Esophagus muscularis mucosa (tissue), 4 donors: ENCODE measurements at regions of chr6 and their contacts with region 1.

Region 1: GRCh38 chr6:106325336-106326178 is at the start of gene ATG5:
- DNase-seq: peak; percentile 100
- H3K4me3 ChIP-seq: peak within 1 kb of the TSS; percentile 87 to 90 (median 88)
- H3K27ac ChIP-seq: peak within 1 kb of the TSS; percentile 88 to 92 (median 90)
- H3K4me1 ChIP-seq: peaks cover 11 to 19% (median 13%) of the 10 kb centered on the region in 4 donors
- H3K27me3 ChIP-seq: peaks cover 0 to 7% (median 0%) of the 10 kb centered on the region in 4 donors
- CTCF ChIP-seq: peak in 1 of 3 experiments; percentile 36
- EP300 ChIP-seq: no peak
- POLR2A ChIP-seq: peak; percentile 56
- total RNA-seq, gene ATG5: 25.3 to 47.8 (median 35.2) TPM

Region 2: GRCh38 chr6:104859225-104860146 is 1466.1 kb before region 1 on chr6 and contains the start of gene HACE1:
- intact Hi-C with region 1: loop called (anchors 10 kb)
- DNase-seq: peak; percentile 96
- H3K4me3 ChIP-seq: peak within 1 kb of the TSS; percentile 79 to 99 (median 92)
- H3K27ac ChIP-seq: peak within 1 kb of the TSS; percentile 83 to 87 (median 84)
- H3K4me1 ChIP-seq: peaks cover 5 to 11% (median 10%) of the 10 kb centered on the region in 4 donors
- H3K27me3 ChIP-seq: no peaks in the 10 kb centered on the region
- CTCF ChIP-seq: peak in 2 of 3 experiments; percentile 20 to 30
- EP300 ChIP-seq: peak; percentile 22
- POLR2A ChIP-seq: no peak
- total RNA-seq, gene HACE1: 11.4 to 21.5 (median 18.7) TPM

Region 3: DNA sequence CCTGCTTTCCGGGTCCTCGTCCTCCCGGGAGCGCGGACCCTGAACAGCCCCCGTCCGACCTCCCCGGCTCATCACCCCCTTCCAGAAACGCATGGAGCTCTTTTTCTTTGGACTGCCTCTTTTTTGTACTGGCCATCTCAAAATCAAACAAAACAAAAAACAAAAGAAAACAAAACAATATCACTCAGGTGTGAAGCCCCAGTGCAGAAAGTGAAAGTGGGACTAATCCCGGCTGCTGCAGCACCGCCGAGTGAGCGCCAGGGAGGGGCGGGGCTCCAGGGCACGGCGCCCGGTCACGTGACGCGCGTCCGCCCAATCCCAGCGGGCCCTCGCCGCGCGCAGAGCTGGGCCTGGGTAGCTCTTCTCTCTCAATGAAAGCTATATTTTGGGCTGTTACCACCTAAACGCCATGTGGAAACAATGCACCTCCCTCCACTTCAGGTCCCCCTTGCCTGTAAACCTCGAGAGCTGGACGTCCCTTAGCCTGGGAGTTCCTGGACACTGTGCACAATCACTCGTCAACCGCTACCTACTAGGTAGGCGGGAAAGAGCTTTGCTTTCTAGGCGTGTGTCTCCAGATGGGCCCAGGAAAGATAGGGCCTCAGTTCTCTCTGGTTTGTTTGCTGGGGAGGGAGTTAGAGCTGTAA is 333.1 kb before region 1 on chr6:
- intact Hi-C with region 1: loop called (anchors 10 kb)
- DNase-seq: no peak
- H3K4me3 ChIP-seq: peak overlapping the region; percentile 61 to 68 (median 66)
- H3K27ac ChIP-seq: peak overlapping the region in 3 of 4 donors; percentile 11 to 22 (median 22)
- H3K4me1 ChIP-seq: peaks cover 20 to 41% (median 38%) of the 10 kb centered on the region in 4 donors
- H3K27me3 ChIP-seq: peaks cover 0 to 91% (median 52%) of the 10 kb centered on the region in 4 donors
- CTCF ChIP-seq: no peak
- EP300 ChIP-seq: no peak
- POLR2A ChIP-seq: no peak

Region 4: DNA sequence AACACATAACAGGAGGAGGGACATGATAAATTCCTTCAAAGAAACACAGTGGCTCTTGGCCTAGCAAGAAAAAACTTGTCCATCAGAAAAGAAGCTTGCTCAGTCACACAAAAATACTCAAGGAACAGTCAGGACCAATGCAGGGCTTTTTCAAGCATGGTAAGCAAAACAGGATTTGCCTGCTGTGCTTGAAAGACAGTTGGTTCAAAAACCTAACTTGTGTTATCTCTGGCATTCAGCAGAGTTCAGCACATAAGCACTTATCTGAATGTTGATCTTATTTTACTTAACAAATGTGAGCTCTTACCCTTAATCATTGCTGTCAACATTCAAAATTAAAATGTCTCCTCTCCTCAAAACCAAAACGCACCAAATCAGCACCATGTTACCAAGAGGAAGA is 38.4 kb before region 1 on chr6:
- intact Hi-C with region 1: no loop called
- DNase-seq: no peak
- H3K4me3 ChIP-seq: no peak overlapping the region
- H3K27ac ChIP-seq: no peak overlapping the region
- H3K4me1 ChIP-seq: no peaks in the 10 kb centered on the region
- H3K27me3 ChIP-seq: no peaks in the 10 kb centered on the region
- CTCF ChIP-seq: no peak
- EP300 ChIP-seq: no peak
- POLR2A ChIP-seq: no peak